Posterior vena cava (tissue), 2 donors: ENCODE measurements at regions of chr17 and their contacts with region 1.

Region 1: GRCh38 chr17:27968206-27968732 is 74.2 kb upstream of the NLK start:
- DNase-seq: no peak

Region 2: DNA sequence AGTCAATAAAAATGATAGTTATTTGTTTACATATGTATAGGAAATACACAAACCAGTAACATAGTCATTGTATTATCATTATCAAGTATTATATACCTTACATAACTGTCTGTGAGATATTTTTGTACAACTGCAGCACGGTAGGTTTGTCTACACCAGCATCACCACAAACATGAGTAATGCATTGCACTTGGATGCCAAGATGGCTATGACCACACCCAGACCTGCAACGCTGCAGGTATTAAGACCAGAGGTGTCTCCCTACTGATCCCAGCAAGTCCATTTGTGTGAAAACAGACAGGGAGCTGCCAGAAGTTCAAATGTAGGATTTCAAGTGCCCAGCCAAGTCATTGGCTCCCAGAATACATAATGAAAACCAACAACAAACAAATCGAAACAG is 133.7 kb before region 1 on chr17:
- intact Hi-C with region 1: loop called in 1 of 2 experiments (anchors 10 kb)
- DNase-seq: no peak